CD8-positive, alpha-beta T cell (primary cell): ENCODE measurements at regions of chrX and their contacts with region 1.

Region 1: DNA sequence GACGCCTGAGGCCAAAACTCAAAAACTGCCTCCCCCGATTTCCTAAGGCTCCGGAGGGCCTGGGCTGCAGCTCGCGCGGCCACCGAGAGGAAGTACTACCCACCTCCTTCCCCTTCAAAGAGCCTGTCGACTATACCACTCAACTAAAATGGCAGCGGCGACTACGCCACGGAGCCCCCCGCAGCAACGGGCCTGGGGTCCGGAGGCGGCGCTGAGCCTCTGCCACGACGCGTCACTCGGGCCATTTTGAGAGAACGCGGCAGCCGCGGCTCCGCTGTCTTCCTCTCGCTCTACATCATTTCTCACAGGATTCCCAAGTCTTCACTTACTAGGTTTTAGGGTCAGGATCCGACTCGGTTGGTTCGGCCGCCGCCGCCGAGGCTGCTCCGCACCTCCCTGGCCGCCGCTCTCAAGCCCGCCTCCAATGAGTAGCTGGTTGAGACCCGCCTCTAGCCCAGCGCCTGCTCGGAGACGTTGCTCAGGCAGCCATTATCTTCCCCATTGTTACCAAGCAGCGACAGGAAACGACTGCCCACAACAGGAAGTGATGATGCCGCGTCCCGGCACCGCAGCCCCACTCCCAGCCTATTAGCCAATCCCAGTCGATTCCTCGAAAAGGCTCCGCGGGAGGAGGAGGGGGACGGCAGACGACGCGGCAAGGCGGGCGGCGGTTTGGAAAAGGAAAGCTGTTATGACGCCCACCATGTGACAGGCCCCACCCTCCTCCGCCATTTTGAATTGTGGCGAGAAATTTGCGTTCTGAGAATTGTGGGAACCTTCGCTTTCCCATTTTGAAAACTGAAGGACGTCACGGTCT is at the start of gene RLIM:
- DNase-seq: peak; percentile 81 to 97 (median 90)
- ATAC-seq: peak; percentile 83
- H3K4me3 ChIP-seq: peak within 1 kb of the TSS; percentile 67 to 75
- H3K4me3 Mint-ChIP-seq: peak within 1 kb of the TSS; percentile 99
- H3K27ac ChIP-seq: peak within 1 kb of the TSS; percentile 99 to 100
- H3K27ac Mint-ChIP-seq: peak within 1 kb of the TSS; percentile 100
- H3K4me1 ChIP-seq: peaks cover 16% of the 10 kb centered on the region
- H3K4me1 Mint-ChIP-seq: peaks cover 24% of the 10 kb centered on the region
- H3K27me3 ChIP-seq: no peaks in the 10 kb centered on the region
- H3K27me3 Mint-ChIP-seq: no peaks in the 10 kb centered on the region
- CTCF ChIP-seq: no peak
- total RNA-seq, gene RLIM: 71.0 to 76.2 TPM

Region 2: GRCh38 chrX:73562984-73563737 is 1051.1 kb before region 1 on chrX and contains the start of gene CHIC1:
- CTCF ChIA-PET with region 1: no interaction called
- POLR2A ChIA-PET with region 1: no interaction called
- intact Hi-C with region 1: loop called in 1 of 2 experiments (anchors 2 kb)
- DNase-seq: peak; percentile 46 to 88 (median 67)
- ATAC-seq: peak; percentile 69
- H3K4me3 ChIP-seq: peak within 1 kb of the TSS; percentile 71 to 74
- H3K4me3 Mint-ChIP-seq: peak within 1 kb of the TSS; percentile 97
- H3K27ac ChIP-seq: peak within 1 kb of the TSS; percentile 78 to 93
- H3K27ac Mint-ChIP-seq: peak within 1 kb of the TSS; percentile 99
- H3K4me1 ChIP-seq: peaks cover 9% of the 10 kb centered on the region
- H3K4me1 Mint-ChIP-seq: peaks cover 32% of the 10 kb centered on the region
- H3K27me3 ChIP-seq: no peaks in the 10 kb centered on the region
- H3K27me3 Mint-ChIP-seq: no peaks in the 10 kb centered on the region
- CTCF ChIP-seq: no peak
- total RNA-seq, gene CHIC1: 5.0 to 5.4 TPM

Region 3: DNA sequence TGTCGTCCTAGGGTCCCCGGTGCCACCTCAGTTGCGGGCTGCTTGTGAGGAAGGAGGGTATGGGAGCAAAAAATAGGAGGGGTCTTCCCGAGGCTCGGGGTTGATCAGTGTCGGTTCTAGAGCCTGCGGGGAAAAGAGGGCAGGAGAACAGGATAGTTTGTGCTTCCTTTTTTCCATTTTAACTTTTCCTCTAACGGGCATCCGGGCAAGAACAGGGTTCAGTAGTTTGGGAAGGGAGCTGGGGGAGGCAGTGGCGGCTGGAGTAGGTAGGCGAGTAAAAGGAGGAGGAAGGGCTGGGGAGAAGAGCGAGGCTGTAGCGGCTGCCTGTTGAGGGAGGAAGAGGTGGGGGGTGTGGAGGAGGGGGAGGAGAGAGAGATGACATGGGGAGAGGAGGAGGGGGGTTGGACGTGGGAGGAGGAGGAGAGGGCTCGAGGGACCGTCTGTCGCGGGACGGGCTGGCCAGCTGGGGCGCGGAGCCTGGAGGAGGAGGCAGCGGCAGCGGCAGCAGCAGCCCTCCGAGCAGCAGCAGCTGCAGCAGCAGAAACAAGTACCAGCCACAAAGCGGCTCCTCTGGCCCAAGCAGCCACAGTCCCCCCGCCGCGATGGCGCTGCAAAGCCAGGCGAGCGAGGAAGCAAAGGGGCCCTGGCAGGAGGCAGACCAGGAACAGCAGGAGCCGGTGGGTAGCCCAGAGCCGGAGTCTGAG is 193.1 kb before region 1 on chrX and contains the start of gene SLC16A2:
- CTCF ChIA-PET with region 1: no interaction called
- POLR2A ChIA-PET with region 1: no interaction called
- intact Hi-C with region 1: loop called in 1 of 2 experiments (anchors 5 kb)
- DNase-seq: peak in 8 of 9 experiments; percentile 0 to 58 (median 30)
- ATAC-seq: peak; percentile 55
- H3K4me3 ChIP-seq: peak within 1 kb of the TSS; percentile 45 to 49
- H3K4me3 Mint-ChIP-seq: peak within 1 kb of the TSS; percentile 87
- H3K27ac ChIP-seq: no peak within 1 kb of the TSS
- H3K27ac Mint-ChIP-seq: no peak within 1 kb of the TSS
- H3K4me1 ChIP-seq: peaks cover 10% of the 10 kb centered on the region
- H3K4me1 Mint-ChIP-seq: peaks cover 13% of the 10 kb centered on the region
- H3K27me3 ChIP-seq: peaks cover 0 to 6% of the 10 kb centered on the region in 2 experiments
- H3K27me3 Mint-ChIP-seq: peaks cover 17% of the 10 kb centered on the region
- CTCF ChIP-seq: no peak
- total RNA-seq, gene SLC16A2: 0.16 to 0.17 TPM

Region 4: GRCh38 chrX:75156021-75156945 is 542.0 kb after region 1 on chrX and contains the start of gene ABCB7:
- CTCF ChIA-PET with region 1: no interaction called
- POLR2A ChIA-PET with region 1: no interaction called
- intact Hi-C with region 1: loop called (anchors 1 to 5 kb)
- DNase-seq: peak; percentile 19 to 83 (median 63)
- ATAC-seq: peak; percentile 91
- H3K4me3 ChIP-seq: peak within 1 kb of the TSS; percentile 87 to 96
- H3K4me3 Mint-ChIP-seq: peak within 1 kb of the TSS; percentile 94
- H3K27ac ChIP-seq: peak within 1 kb of the TSS; percentile 77 to 80
- H3K27ac Mint-ChIP-seq: peak within 1 kb of the TSS; percentile 98
- H3K4me1 ChIP-seq: peaks cover 17% of the 10 kb centered on the region
- H3K4me1 Mint-ChIP-seq: peaks cover 49% of the 10 kb centered on the region
- H3K27me3 ChIP-seq: no peaks in the 10 kb centered on the region
- H3K27me3 Mint-ChIP-seq: no peaks in the 10 kb centered on the region
- CTCF ChIP-seq: no peak
- total RNA-seq, gene ABCB7: 16.6 to 17.3 TPM

Region 5: DNA sequence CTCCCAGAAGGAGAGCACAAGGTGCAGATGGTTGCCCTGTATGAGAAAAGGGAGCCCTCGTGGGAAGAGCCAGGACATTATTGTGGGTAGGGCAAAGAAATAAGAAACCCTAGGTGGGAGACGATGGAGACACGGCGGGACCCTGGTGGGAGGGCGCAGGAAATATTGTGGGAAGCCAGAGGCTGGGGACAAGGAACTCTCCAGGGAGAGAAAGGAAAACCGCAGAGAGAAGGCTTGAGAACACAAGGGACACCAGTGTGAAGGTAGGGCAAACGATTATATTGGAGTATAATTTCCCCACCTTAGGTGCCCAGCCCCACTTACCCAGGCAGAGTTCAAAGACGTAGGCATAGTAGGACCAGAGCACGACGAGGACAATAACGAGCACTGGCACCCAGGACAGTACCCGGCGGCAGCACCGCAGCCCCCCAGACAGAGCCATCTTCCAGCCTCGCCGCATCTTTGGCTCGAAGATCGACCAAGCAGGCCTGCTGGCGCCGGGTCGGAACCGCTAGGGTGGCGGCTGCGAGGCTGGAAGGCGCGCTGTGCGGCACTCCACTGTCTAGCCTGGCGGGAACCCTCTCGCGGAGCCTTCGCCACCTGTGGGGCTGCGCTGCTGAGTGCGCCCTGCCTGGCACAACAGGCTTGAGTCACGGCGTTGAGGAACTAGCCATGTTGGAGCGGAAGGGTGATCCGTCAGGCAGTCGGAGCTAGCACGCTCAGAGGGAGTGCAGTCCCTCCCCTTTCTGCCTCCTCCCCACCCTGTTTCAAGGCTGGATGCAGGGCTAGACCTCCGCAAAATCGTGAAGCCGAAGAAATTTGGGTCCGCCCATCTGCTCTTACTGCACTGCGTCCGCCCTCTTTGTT is 908.5 kb after region 1 on chrX and contains the start of gene ZDHHC15:
- CTCF ChIA-PET with region 1: no interaction called
- POLR2A ChIA-PET with region 1: no interaction called
- intact Hi-C with region 1: loop called in 1 of 2 experiments (anchors 10 kb)
- DNase-seq: peak in 8 of 9 experiments; percentile 17 to 63 (median 46)
- ATAC-seq: peak; percentile 87
- H3K4me3 ChIP-seq: peak within 1 kb of the TSS; percentile 43 to 76
- H3K4me3 Mint-ChIP-seq: peak within 1 kb of the TSS; percentile 86
- H3K27ac ChIP-seq: peak within 1 kb of the TSS in 1 of 2 experiments; percentile 50
- H3K27ac Mint-ChIP-seq: peak within 1 kb of the TSS; percentile 50
- H3K4me1 ChIP-seq: no peaks in the 10 kb centered on the region
- H3K4me1 Mint-ChIP-seq: peaks cover 21% of the 10 kb centered on the region
- H3K27me3 ChIP-seq: no peaks in the 10 kb centered on the region
- H3K27me3 Mint-ChIP-seq: no peaks in the 10 kb centered on the region
- CTCF ChIP-seq: no peak
- total RNA-seq, gene ZDHHC15: 0.06 to 0.24 TPM

Region 6: DNA sequence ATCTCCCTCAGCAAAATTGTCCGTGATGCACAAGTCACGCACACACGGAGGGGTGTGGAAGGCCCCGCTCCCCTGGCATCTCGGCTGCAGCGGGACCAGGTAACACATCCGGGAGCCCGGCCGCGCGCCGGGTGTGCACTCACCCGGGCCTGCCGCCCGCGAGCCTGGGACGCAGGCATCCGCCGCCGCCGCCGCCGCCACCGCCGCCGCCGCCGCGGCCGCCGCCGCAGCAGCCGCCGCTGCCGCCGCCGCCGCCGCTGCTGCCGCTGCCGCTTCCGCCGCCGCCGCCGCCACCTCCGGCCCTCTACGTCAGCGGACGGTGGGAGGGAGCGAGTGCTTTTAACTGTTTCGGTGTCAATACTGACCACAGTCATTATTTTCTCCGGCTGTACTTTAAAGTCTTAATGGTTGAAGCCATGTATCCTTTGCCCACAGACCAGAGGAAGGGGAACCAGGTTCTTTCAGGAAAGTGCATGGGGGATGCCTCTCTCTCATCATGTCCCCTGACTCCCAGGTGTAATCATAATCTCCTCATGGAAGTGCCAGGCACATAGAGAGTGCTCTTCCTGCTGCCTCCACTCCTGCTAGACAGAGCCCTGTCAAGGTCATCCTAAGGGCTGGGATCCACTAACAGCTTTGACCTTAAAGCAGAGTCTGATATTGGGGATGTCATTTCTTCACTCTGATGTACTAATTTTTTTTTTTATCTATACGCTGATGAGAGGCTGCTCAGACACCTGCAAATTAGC is 1132.8 kb after region 1 on chrX:
- CTCF ChIA-PET with region 1: no interaction called
- POLR2A ChIA-PET with region 1: no interaction called
- intact Hi-C with region 1: no loop called
- DNase-seq: peak in 7 of 9 experiments; percentile 3 to 59 (median 11)
- ATAC-seq: peak; percentile 51
- H3K4me3 ChIP-seq: peak overlapping the region; percentile 38 to 43
- H3K4me3 Mint-ChIP-seq: peak overlapping the region; percentile 84
- H3K27ac ChIP-seq: no peak overlapping the region
- H3K27ac Mint-ChIP-seq: peak overlapping the region; percentile 57
- H3K4me1 ChIP-seq: peaks cover 8% of the 10 kb centered on the region
- H3K4me1 Mint-ChIP-seq: peaks cover 12% of the 10 kb centered on the region
- H3K27me3 ChIP-seq: no peaks in the 10 kb centered on the region
- H3K27me3 Mint-ChIP-seq: no peaks in the 10 kb centered on the region
- CTCF ChIP-seq: no peak

Region 7: DNA sequence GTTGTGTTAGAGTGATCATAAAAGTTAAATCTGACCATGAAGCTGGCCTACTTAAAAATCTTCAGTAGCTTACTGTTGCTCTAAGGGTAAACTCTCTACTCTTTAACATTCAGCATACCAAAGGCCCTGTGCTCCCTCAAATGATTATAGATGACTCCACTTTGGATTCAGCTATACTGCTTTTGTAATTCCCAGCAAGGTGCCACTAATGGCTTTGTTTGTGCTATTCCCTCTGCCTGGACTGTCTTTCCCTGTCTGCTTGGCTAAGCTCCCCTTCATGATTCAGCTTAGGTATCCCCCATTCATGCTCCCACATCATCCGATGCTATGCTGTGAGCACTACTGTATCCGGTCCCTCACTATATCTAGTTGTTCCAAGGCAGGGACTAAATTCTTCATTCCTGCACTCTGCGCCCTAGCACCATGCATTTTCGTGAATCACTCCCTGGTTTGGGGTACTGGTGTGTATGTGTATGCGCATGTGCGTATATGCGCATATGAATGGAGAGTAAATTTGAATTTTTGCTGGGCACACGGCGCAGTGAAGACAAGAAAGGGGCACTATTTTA is 1558.1 kb after region 1 on chrX:
- CTCF ChIA-PET with region 1: no interaction called
- POLR2A ChIA-PET with region 1: interaction called, 3 read pairs
- intact Hi-C with region 1: loop called (anchors 2 to 10 kb)
- DNase-seq: no peak
- ATAC-seq: peak; percentile 51
- H3K4me3 ChIP-seq: peak overlapping the region; percentile 70 to 71
- H3K4me3 Mint-ChIP-seq: peak overlapping the region; percentile 94
- H3K27ac ChIP-seq: peak overlapping the region; percentile 81 to 90
- H3K27ac Mint-ChIP-seq: peak overlapping the region; percentile 98
- H3K4me1 ChIP-seq: peaks cover 32% of the 10 kb centered on the region
- H3K4me1 Mint-ChIP-seq: peaks cover 57% of the 10 kb centered on the region
- H3K27me3 ChIP-seq: no peaks in the 10 kb centered on the region
- H3K27me3 Mint-ChIP-seq: no peaks in the 10 kb centered on the region
- CTCF ChIP-seq: no peak